GM12878 (cell line): ENCODE measurements at regions of chr17 and their contacts with region 1.

Region 1: DNA sequence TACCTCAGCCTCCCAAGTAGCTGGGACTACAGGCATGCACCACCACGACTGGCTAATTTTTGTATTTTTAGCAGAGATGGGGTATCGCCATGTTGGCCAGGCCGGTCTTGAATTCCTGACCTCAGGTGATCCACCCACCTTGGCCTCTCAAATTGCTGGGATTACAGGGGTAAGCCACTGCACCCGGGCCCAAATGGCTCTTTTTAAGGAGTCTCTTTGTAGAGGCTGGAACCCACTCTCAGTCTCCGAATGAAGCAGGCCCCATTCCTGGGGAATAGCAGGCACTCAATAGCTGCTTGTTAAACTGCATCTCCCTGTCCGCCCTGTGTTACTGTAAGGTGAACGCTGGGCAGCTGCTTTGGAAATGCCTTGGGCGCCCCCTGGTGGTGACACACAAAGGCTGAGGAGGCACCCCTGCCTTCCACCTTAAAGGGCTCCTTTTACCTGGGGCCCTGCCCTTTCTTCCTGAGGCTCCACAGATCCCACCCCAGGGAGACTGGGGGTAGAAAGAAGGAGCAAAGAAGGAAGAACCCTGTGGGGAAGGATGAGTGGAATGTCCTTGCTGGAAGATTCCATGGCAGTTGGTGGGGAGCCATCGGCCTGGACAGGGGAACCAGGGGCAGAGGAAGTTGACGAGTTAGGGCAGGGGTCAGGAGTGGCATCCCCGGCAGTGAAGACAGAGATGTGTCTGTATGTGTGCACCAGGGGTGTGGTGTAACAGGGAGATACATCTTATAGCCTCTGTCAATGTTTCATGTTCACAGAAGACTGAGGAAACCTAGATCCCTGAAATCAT is 6.1 kb upstream of the SP2 start:
- DNase-seq: no peak
- ATAC-seq: peak; percentile 99
- H3K4me3 ChIP-seq: no peak overlapping the region
- H3K27ac ChIP-seq: no peak overlapping the region
- H3K4me1 ChIP-seq: peaks cover 12% of the 10 kb centered on the region
- H3K27me3 ChIP-seq: no peaks in the 10 kb centered on the region
- CTCF ChIP-seq: peak; percentile 91 to 97 (median 96)
- EP300 ChIP-seq: no peak
- POLR2A ChIP-seq: no peak
- RAD21 ChIP-seq: peak; percentile 96

Region 2: DNA sequence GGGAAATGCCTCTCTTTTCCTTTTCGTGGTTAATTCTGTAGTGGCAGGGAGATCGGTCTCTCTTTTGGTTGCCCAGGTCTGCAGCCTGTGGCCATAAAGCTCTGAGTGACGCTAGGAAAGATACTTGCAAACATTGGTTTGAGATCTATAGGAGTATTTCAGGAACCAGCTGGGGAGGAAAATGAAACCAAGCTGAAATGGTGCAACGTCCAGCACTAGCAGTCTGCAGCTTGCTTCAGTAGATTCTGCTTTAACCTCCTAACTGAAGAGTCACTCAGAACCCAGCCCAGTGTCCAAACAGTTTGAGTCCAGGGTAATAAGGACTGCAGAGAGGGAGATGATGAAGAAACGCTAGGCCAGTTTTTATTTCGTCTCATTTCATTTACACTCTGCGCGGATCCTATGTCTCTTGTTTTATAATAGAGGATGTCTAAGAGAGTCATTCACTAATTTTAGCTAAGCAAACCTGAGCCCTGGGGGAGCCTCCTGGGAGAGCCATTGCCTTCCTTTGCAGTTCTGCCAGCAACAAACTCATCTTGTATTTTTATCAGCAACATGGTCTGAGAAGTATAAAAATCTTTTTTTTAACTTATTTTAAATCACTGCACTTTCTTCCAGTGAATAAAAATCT is 18.1 kb after region 1 on chr17:
- CTCF ChIA-PET with region 1: interaction called, 10 read pairs
- POLR2A ChIA-PET with region 1: interaction called, 6 read pairs
- RAD21 ChIA-PET with region 1: interaction called, 5 read pairs
- SMC1A ChIA-PET with region 1: interaction called, 3 read pairs
- in situ Hi-C with region 1: no loop called
- intact Hi-C with region 1: no loop called
- DNase-seq: no peak
- ATAC-seq: no peak
- H3K4me3 ChIP-seq: no peak overlapping the region
- H3K27ac ChIP-seq: no peak overlapping the region
- H3K4me1 ChIP-seq: no peaks in the 10 kb centered on the region
- H3K27me3 ChIP-seq: no peaks in the 10 kb centered on the region
- CTCF ChIP-seq: no peak
- EP300 ChIP-seq: no peak
- POLR2A ChIP-seq: no peak
- RAD21 ChIP-seq: no peak

Region 3: GRCh38 chr17:48215583-48216139 is 325.7 kb after region 1 on chr17:
- CTCF ChIA-PET with region 1: no interaction called
- POLR2A ChIA-PET with region 1: no interaction called
- RAD21 ChIA-PET with region 1: no interaction called
- SMC1A ChIA-PET with region 1: no interaction called
- in situ Hi-C with region 1: no loop called
- intact Hi-C with region 1: no loop called
- DNase-seq: no peak
- ATAC-seq: peak; percentile 63
- H3K4me3 ChIP-seq: no peak overlapping the region
- H3K27ac ChIP-seq: no peak overlapping the region
- H3K4me1 ChIP-seq: no peaks in the 10 kb centered on the region
- H3K27me3 ChIP-seq: no peaks in the 10 kb centered on the region
- CTCF ChIP-seq: peak; percentile 25 to 53 (median 50); a peak in 5 of 6 replicates
- EP300 ChIP-seq: no peak
- POLR2A ChIP-seq: no peak
- RAD21 ChIP-seq: peak; percentile 67